ENCODE measurements at regions of chr17 and their contacts with region 1.

Region 1: GRCh38 chr17:2336215-2336851 is at the start of gene TSR1:
- DNase-seq: peak; percentile 94 to 99
- ATAC-seq: peak; percentile 92 to 97
- H3K4me3 ChIP-seq: peak within 1 kb of the TSS; percentile 99
- H3K27ac ChIP-seq: peak within 1 kb of the TSS; percentile 94 to 99
- H3K4me1 ChIP-seq: peaks cover 20% of the 10 kb centered on the region
- CTCF ChIP-seq: peak; percentile 38
- EP300 ChIP-seq: no peak
- POLR2A ChIP-seq: peak; percentile 83
- RAD21 ChIP-seq: peak in 1 of 2 experiments; percentile 19; a peak in 2 of 5 replicates
- polyA plus RNA-seq, gene TSR1: 38.3 and 45.7 TPM in 2 replicates

Region 2: DNA sequence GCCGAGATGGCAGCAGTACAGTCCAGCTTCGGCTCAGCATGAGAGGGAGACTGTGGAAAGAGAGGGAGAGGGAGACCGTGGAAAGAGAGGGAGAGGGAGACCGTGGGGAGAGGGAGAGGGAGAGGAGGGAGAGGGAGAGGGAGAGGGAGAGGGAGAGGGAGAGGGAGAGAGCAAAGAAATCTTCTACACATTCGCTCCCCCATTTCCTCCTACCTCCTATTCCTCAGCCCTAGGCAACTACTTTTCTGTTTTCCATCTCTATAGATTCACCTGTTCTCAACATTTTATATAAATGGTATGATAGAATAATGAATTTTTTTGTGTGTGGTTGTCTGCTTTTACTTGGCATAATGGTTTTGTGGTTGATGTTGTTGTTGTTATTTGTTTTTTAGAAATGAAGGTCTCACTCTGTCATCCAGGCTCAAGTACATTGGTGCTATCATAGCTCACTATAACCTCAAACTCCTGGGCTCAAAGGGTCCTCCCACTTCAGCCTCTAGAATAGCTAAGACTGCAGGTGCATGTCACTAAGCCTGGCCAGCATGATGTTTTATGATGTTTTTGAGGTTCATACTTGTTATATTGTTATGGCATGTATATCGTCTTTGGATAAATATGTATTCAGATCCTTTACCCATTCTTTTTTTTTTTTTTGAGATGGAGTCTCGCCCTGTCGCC is 645.6 kb before region 1 on chr17:
- CTCF ChIA-PET with region 1: no interaction called
- POLR2A ChIA-PET with region 1: interaction called, 16 read pairs
- DNase-seq: no peak
- ATAC-seq: peak; percentile 70 to 71; a peak in 5 of 6 replicates
- H3K4me3 ChIP-seq: no peak overlapping the region
- H3K27ac ChIP-seq: no peak overlapping the region
- H3K4me1 ChIP-seq: no peaks in the 10 kb centered on the region; the same call in 2 of the 3 replicates
- CTCF ChIP-seq: no peak
- EP300 ChIP-seq: no peak
- POLR2A ChIP-seq: no peak
- RAD21 ChIP-seq: no peak

Region 3: DNA sequence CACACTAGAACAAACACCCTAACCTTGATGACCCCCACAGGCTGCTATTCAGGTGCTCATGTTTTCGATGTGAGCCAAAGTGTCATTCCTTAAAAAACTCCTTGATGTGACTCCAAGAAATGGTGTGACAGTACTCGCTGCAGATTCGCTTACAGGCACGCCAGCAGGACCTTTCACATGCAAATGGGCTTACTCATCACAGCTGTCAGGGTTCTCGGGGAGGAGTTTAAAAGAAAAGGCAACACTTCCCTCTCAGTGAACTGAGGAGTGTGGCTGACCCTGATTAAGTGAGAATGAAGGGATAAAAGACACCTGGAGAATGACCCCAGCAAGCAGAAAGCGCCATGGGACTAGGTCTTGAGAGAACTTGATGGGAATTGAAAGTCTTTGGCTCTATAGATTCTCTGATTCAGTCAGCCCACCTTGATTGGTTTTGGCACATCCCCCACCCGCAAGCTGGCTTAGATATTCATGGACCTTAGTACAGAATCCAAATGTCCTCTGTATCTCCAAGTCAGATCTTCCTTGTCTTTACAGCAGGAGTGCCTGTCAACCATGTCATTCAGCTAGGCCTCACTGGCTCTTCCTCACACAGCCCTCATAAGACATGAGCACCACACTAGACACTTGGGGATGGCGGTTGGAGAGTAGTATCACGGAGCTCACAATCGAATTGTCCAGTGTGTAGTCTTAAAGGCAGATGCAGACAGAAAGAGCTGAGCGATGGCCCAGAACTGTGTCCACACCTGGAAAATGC is 198.8 kb before region 1 on chr17:
- CTCF ChIA-PET with region 1: no interaction called
- POLR2A ChIA-PET with region 1: no interaction called
- DNase-seq: no peak
- ATAC-seq: peak; percentile 19 to 27; a peak in 3 of 6 replicates
- H3K4me3 ChIP-seq: no peak overlapping the region
- H3K27ac ChIP-seq: no peak overlapping the region
- H3K4me1 ChIP-seq: peaks cover 8% of the 10 kb centered on the region; the same call in 2 of the 3 replicates
- CTCF ChIP-seq: no peak
- EP300 ChIP-seq: no peak
- POLR2A ChIP-seq: no peak
- RAD21 ChIP-seq: no peak

Region 4: GRCh38 chr17:2303204-2304188 is 32.8 kb before region 1 on chr17 and contains the starts of genes SMG6 and SRR:
- CTCF ChIA-PET with region 1: interaction called, 8 read pairs
- POLR2A ChIA-PET with region 1: interaction called, 37 read pairs
- DNase-seq: peak; percentile 92 to 95
- ATAC-seq: peak; percentile 96 to 97
- H3K4me3 ChIP-seq: peak within 1 kb of the TSS; percentile 75
- H3K27ac ChIP-seq: peak within 1 kb of the TSS; percentile 97 to 99
- H3K4me1 ChIP-seq: peaks cover 13% of the 10 kb centered on the region; the same call in 2 of the 3 replicates
- CTCF ChIP-seq: no peak
- EP300 ChIP-seq: no peak
- POLR2A ChIP-seq: peak; percentile 86
- RAD21 ChIP-seq: no peak
- polyA plus RNA-seq, gene SMG6: 4.7 and 13.1 TPM in 2 replicates
- polyA plus RNA-seq, gene SRR: 13.2 and 16.2 TPM in 2 replicates

Region 5: GRCh38 chr17:2323629-2324314 is 12.6 kb before region 1 on chr17:
- CTCF ChIA-PET with region 1: interaction called, 14 read pairs
- POLR2A ChIA-PET with region 1: interaction called, 5 read pairs
- DNase-seq: no peak
- ATAC-seq: no peak
- H3K4me3 ChIP-seq: no peak overlapping the region
- H3K27ac ChIP-seq: no peak overlapping the region
- H3K4me1 ChIP-seq: no peaks in the 10 kb centered on the region
- CTCF ChIP-seq: no peak
- EP300 ChIP-seq: no peak
- POLR2A ChIP-seq: no peak
- RAD21 ChIP-seq: no peak

Region 6: GRCh38 chr17:2347547-2348307 is 11.4 kb after region 1 on chr17:
- CTCF ChIA-PET with region 1: interaction called, 79 read pairs
- POLR2A ChIA-PET with region 1: interaction called, 26 read pairs
- DNase-seq: peak; percentile 47 to 84
- ATAC-seq: peak; percentile 78 to 87
- H3K4me3 ChIP-seq: no peak overlapping the region
- H3K27ac ChIP-seq: peak overlapping the region; percentile 14 to 77; a peak in 4 of 6 replicates
- H3K4me1 ChIP-seq: peaks cover 14% of the 10 kb centered on the region
- CTCF ChIP-seq: no peak
- EP300 ChIP-seq: no peak
- POLR2A ChIP-seq: no peak
- RAD21 ChIP-seq: no peak

Region 7: DNA sequence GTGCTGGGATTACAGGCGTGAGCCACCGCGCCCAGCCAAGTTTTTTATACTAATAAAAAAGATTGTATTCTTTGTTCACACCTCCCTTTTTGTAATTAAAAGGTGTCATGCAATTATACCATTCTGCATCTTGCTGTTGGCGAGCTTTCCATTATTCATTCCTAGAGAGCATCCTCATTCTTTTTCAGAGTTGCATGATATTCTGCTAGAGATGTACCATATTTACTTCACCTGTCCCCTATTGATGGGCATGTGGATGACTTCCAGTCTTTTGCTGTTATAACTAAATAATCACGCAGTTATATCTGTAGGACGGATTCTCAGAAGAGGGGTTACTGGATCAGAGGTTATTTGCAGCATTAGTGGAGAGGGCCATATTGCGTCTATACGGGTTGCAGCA is 18.0 kb after region 1 on chr17:
- CTCF ChIA-PET with region 1: interaction called, 79 read pairs
- POLR2A ChIA-PET with region 1: interaction called, 11 read pairs
- DNase-seq: no peak
- ATAC-seq: no peak
- H3K4me3 ChIP-seq: no peak overlapping the region
- H3K27ac ChIP-seq: no peak overlapping the region
- H3K4me1 ChIP-seq: peaks cover 15% of the 10 kb centered on the region
- CTCF ChIP-seq: no peak
- EP300 ChIP-seq: no peak
- POLR2A ChIP-seq: no peak
- RAD21 ChIP-seq: no peak

Region 8: DNA sequence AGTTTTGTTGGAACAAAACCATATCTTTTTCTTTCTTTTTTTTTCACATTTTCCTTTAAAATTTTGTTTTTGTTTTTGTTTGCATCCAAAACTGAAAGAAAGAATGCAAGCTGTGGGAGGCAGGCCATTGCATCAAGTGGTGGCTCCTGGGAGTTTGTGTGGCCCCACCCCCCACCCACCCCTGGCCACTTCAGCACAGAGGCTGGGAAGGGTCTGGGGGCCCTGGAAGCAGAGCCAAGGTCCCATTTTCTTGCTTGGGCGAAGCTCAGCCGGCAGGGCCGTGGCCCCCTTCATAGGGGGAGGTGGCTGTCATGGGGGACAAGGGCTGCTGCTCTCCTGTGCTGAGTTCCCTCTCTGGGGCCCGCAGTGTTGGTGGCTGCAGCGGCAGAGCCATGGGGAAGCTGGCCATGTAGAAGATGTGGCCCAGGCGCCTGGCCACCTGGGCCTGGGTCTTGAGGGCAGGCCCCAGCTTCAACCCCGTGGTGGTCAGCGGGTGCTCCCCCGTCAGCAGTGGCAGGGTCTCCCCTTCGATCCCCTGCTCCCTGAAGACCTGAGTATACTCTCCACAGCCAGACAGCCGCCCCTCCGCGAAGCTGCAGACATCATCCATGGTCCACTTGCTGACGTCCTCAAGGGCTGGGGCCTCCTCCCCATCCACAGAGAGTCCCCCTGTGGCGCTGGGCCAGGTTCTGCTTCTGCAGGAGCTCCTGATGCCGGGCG is 276.9 kb after region 1 on chr17:
- CTCF ChIA-PET with region 1: no interaction called
- POLR2A ChIA-PET with region 1: no interaction called
- DNase-seq: no peak
- ATAC-seq: peak in 1 of 2 experiments; percentile 19; a peak in 1 of 6 replicates
- H3K4me3 ChIP-seq: no peak overlapping the region
- H3K27ac ChIP-seq: no peak overlapping the region
- H3K4me1 ChIP-seq: peaks cover 6% of the 10 kb centered on the region
- CTCF ChIP-seq: no peak
- EP300 ChIP-seq: no peak
- POLR2A ChIP-seq: no peak
- RAD21 ChIP-seq: no peak

Measured in A549 (cell line).